ENCODE measurements at regions of chr1 and their contacts with region 1.

Region 1: DNA sequence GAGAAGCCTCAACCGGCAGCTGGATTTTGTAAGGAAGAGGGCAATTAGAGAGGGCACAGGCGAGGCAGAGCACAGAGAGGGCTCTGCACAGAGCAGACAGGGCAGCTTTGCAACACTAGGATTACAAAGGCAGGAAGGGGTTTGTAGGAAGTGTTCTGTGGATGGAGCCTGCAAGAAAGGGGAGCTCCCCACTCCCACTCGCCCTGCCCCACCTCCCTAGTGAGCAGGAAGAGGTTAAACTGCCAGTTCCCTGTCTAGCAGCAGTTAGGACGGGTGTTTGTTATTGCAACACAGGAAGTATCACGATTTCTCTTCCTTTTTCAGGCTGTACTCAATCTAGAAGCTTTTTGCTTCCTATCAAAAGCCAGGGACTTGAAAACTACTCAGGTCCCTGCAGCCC is 63.3 kb upstream of the LRRC8D start:
- DNase-seq: peak in 6 of 10 donors; percentile 15 to 56 (median 42)
- ATAC-seq: peak; percentile 60 to 74
- H3K4me3 Mint-ChIP-seq: peak overlapping the region; percentile 65 to 86 (median 82)
- H3K27ac Mint-ChIP-seq: peak overlapping the region; percentile 84 to 99 (median 94)
- H3K4me1 Mint-ChIP-seq: peaks cover 47 to 90% (median 85%) of the 10 kb centered on the region in 4 donors
- H3K27me3 Mint-ChIP-seq: no peaks in the 10 kb centered on the region

Region 2: DNA sequence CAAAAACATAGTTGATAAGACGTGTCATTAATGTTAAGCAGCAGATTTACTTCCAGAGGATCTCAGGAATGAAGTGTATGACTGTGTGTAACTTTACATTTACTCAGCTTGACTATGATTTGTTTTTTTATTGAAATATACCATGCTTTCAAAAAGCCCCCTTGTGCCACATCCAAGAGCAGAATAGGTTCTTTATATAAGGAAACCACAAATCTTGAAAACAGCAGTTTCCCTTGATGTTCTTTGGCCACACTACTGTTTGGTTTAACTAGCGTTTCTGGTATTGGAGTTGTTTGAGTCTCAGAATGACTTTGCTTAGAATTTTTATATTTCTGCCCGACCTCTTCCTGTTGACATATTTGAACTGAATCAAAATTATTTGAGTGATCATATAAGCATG is 99.6 kb before region 1 on chr1:
- POLR2A ChIA-PET with region 1: interaction called, 27 read pairs
- DNase-seq: peak in 8 of 10 donors; percentile 27 to 85 (median 64)
- ATAC-seq: peak; percentile 85 to 93
- H3K4me3 Mint-ChIP-seq: peak overlapping the region; percentile 22 to 79 (median 56)
- H3K27ac Mint-ChIP-seq: peak overlapping the region; percentile 74 to 96 (median 92)
- H3K4me1 Mint-ChIP-seq: peaks cover 44 to 94% (median 85%) of the 10 kb centered on the region in 4 donors
- H3K27me3 Mint-ChIP-seq: no peaks in the 10 kb centered on the region

Region 3: DNA sequence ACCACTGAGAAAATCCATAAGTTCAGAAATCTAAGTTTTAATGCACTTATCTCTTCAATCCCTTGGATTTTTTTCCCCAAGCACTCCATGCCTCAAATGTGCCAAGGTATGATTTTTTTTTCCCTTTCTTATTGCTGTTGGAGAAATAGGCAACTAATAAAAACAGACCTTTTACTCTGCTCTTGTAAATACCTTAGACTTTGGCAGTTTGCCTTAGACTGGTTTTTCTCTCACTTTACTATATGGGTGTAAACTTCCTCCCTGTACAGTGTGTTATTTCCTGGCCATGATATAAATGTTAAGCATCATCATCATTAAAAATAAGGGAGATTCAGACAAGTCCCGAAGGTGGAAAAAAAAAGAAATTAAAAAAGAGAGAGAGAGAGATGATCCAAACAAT is 58.9 kb before region 1 on chr1:
- POLR2A ChIA-PET with region 1: interaction called, 16 read pairs
- DNase-seq: no peak
- ATAC-seq: peak in 1 of 2 donors; percentile 34
- H3K4me3 Mint-ChIP-seq: peak overlapping the region in 9 of 10 donors; percentile 62 to 87 (median 80)
- H3K27ac Mint-ChIP-seq: peak overlapping the region; percentile 72 to 98 (median 94)
- H3K4me1 Mint-ChIP-seq: peaks cover 40 to 92% (median 87%) of the 10 kb centered on the region in 4 donors
- H3K27me3 Mint-ChIP-seq: no peaks in the 10 kb centered on the region

Measured in naive thymus-derived CD8-positive, alpha-beta T cell (primary cell).